Endothelial cell of umbilical vein (primary cell): ENCODE measurements at regions of chr9 and their contacts with region 1.

Region 1: DNA sequence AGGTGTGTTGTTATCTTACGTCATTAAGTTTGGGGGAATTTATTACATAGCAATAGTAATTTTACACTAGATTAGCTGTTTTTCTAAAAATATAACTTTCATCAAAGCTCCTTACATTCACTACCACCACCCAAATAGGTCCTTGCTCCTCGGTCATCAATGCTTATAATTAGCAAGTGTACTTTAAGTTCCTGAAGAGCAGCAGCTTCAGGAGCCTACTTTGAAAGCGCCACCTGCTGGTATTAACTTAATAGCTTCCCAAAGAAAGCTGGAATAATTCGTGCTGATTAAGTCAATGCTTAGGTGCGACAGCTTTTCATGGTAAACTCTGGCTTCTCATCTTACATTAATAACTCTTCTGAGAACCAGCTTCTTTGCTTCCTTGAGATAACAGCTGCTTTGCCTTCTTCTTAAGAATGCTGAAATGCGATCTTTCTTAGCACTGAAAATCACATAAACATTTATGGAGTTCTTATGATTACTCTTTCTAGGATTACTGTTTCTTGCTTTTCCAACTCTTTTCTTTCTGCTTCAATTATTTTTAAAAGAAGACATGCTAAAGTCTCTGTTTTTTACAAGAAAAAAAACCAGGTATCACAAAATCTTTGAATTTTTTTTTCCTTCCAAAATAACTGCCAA is 10.0 kb upstream of the C5 start:
- DNase-seq: peak; percentile 80
- H3K4me3 ChIP-seq: no peak overlapping the region
- H3K27ac ChIP-seq: no peak overlapping the region
- H3K4me1 ChIP-seq: peaks cover 27% of the 10 kb centered on the region
- H3K27me3 ChIP-seq: no peaks in the 10 kb centered on the region
- CTCF ChIP-seq: peak; percentile 60 to 63
- POLR2A ChIP-seq: no peak

Region 2: DNA sequence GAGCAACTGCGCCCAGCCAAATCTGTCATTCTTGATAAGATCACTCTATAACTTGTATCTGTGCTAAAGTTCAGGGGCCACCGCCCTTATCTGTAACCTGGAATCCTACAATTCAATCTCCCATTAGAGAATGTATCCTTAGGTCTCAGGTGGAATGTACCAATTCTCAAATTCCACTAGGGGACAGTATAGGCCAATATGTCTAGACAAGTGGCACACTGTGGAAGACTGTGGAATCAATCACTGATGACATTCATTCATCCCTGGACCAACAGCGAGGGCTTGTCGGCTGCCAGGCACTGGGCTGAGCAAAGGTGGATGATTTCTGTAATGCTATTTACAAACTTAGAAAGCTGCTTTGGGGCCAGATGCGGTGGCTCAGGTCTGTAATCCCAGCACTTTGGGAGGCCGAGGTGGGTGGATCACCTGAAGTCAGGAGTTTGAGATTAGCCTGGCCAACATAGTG is 317.1 kb before region 1 on chr9:
- CTCF ChIA-PET with region 1: interaction called, 3 read pairs
- POLR2A ChIA-PET with region 1: no interaction called
- dilution Hi-C with region 1: no loop called
- intact Hi-C with region 1: loop called (anchors 1 kb)
- DNase-seq: peak; percentile 26
- H3K4me3 ChIP-seq: no peak overlapping the region
- H3K27ac ChIP-seq: no peak overlapping the region
- H3K4me1 ChIP-seq: peaks cover 18% of the 10 kb centered on the region
- H3K27me3 ChIP-seq: no peaks in the 10 kb centered on the region
- CTCF ChIP-seq: peak; percentile 52 to 55
- POLR2A ChIP-seq: no peak

Region 3: GRCh38 chr9:120761011-120761410 is 299.1 kb before region 1 on chr9:
- CTCF ChIA-PET with region 1: interaction called, 127 read pairs
- POLR2A ChIA-PET with region 1: no interaction called
- dilution Hi-C with region 1: no loop called
- intact Hi-C with region 1: loop called (anchors 1 kb)
- DNase-seq: no peak
- H3K4me3 ChIP-seq: no peak overlapping the region
- H3K27ac ChIP-seq: no peak overlapping the region
- H3K4me1 ChIP-seq: no peaks in the 10 kb centered on the region
- H3K27me3 ChIP-seq: no peaks in the 10 kb centered on the region
- CTCF ChIP-seq: no peak
- POLR2A ChIP-seq: no peak

Region 4: GRCh38 chr9:121023064-121023463 is 37.1 kb before region 1 on chr9:
- CTCF ChIA-PET with region 1: interaction called, 29 read pairs
- POLR2A ChIA-PET with region 1: no interaction called
- dilution Hi-C with region 1: no loop called
- intact Hi-C with region 1: no loop called
- DNase-seq: no peak
- H3K4me3 ChIP-seq: no peak overlapping the region
- H3K27ac ChIP-seq: no peak overlapping the region
- H3K4me1 ChIP-seq: no peaks in the 10 kb centered on the region
- H3K27me3 ChIP-seq: no peaks in the 10 kb centered on the region
- CTCF ChIP-seq: no peak
- POLR2A ChIP-seq: no peak

Region 5: GRCh38 chr9:121038804-121039203 is 21.3 kb before region 1 on chr9:
- CTCF ChIA-PET with region 1: interaction called, 32 read pairs
- POLR2A ChIA-PET with region 1: no interaction called
- dilution Hi-C with region 1: no loop called
- intact Hi-C with region 1: no loop called
- DNase-seq: no peak
- H3K4me3 ChIP-seq: no peak overlapping the region
- H3K27ac ChIP-seq: no peak overlapping the region
- H3K4me1 ChIP-seq: no peaks in the 10 kb centered on the region
- H3K27me3 ChIP-seq: no peaks in the 10 kb centered on the region
- CTCF ChIP-seq: no peak
- POLR2A ChIP-seq: no peak

Region 6: DNA sequence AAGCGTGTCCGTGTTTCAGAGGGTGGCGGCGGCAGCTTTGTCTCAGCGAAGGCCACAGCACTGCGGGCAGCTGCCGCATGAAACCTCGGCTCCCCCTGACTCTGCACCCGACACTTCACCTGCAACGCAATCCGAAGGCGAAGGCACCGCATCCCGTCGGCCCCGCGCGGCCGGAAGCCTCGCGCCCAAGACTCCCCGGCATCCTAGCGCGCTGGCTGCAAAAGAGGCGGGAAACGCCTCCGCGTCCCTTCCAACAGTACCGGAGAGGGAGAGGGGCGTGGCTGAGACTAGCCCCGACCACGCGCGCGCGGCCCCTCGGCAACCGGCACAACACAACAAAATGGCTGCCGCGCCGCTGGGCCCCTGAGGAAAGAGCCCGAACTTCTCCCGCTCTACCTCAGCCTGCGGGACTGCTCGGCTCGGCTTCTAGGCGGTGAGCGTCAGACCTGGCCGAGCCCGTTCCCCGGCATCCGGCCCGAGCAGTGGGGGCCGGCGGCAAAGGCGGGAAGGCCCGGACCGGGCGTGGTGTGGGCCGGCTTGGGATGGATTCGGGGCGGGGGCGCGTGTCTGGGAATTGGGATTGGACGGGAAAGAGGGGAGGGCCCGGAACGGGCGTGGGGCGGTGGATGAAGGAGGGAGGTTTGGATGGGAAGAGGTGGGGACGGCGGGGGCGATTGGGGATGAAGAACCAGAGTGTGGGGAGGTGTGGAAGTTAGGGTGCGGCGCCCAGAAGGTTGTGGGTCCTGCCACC is 14.7 kb after region 1 on chr9 and contains the start of gene CNTRL:
- CTCF ChIA-PET with region 1: interaction called, 24 read pairs
- POLR2A ChIA-PET with region 1: no interaction called
- dilution Hi-C with region 1: no loop called
- intact Hi-C with region 1: no loop called
- DNase-seq: peak; percentile 86
- H3K4me3 ChIP-seq: peak within 1 kb of the TSS; percentile 6 to 78 (median 36)
- H3K27ac ChIP-seq: peak within 1 kb of the TSS; percentile 56
- H3K4me1 ChIP-seq: peaks cover 25% of the 10 kb centered on the region
- H3K27me3 ChIP-seq: no peaks in the 10 kb centered on the region
- CTCF ChIP-seq: no peak
- POLR2A ChIP-seq: peak; percentile 49
- total RNA-seq, gene CNTRL: 21.8 and 22.0 TPM in 2 replicates

Region 7: GRCh38 chr9:121178676-121179372 is 118.7 kb after region 1 on chr9:
- CTCF ChIA-PET with region 1: no interaction called
- POLR2A ChIA-PET with region 1: no interaction called
- dilution Hi-C with region 1: no loop called
- intact Hi-C with region 1: no loop called
- DNase-seq: no peak
- H3K4me3 ChIP-seq: no peak overlapping the region
- H3K27ac ChIP-seq: no peak overlapping the region
- H3K4me1 ChIP-seq: no peaks in the 10 kb centered on the region
- H3K27me3 ChIP-seq: no peaks in the 10 kb centered on the region
- CTCF ChIP-seq: no peak
- POLR2A ChIP-seq: no peak